ENCODE measurements at regions of chr5 and their contacts with region 1.

Region 1: GRCh38 chr5:217860-218456 is at the starts of genes CCDC127 and SDHA:
- DNase-seq: peak; percentile 100
- H3K4me3 Mint-ChIP-seq: peak within 1 kb of the TSS; percentile 97
- H3K27ac Mint-ChIP-seq: peak within 1 kb of the TSS; percentile 93
- H3K4me1 Mint-ChIP-seq: peaks cover 47% of the 10 kb centered on the region
- H3K27me3 Mint-ChIP-seq: no peaks in the 10 kb centered on the region
- total RNA-seq, gene CCDC127: 7.1 and 7.7 TPM in 2 replicates
- total RNA-seq, gene SDHA: 147 and 150 TPM in 2 replicates

Region 2: GRCh38 chr5:188488-189481 is 29.2 kb before region 1 on chr5:
- intact Hi-C with region 1: loop called (anchors 2 kb)
- DNase-seq: peak; percentile 97
- H3K4me3 Mint-ChIP-seq: peak overlapping the region; percentile 35
- H3K27ac Mint-ChIP-seq: no peak overlapping the region
- H3K4me1 Mint-ChIP-seq: peaks cover 12% of the 10 kb centered on the region
- H3K27me3 Mint-ChIP-seq: peaks cover 4% of the 10 kb centered on the region

Region 3: DNA sequence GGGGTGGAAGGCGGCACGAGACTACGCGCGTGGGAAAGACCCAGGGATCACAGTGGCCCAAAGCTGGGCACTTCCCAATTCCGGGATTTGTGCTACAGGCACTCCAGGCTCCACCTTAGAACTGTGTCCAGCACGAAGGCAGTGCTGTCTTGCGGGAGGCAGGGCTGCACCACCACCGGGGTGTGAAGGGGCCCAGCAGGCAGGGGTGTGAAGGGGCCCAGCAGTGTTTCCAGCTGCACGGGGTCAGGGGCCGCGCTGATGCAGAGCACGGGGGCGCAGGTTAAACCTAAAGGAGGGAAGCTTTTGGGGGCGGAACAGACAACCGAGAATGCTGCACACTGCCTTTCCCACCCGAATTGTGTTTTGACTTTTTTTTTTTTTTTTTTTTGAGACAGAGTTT is 52.4 kb after region 1 on chr5:
- intact Hi-C with region 1: loop called (anchors 1 kb)
- DNase-seq: no peak
- H3K4me3 Mint-ChIP-seq: peak overlapping the region; percentile 86
- H3K27ac Mint-ChIP-seq: peak overlapping the region; percentile 78
- H3K4me1 Mint-ChIP-seq: peaks cover 35% of the 10 kb centered on the region
- H3K27me3 Mint-ChIP-seq: no peaks in the 10 kb centered on the region

Region 4: GRCh38 chr5:373710-374602 is 156.0 kb after region 1 on chr5:
- intact Hi-C with region 1: loop called (anchors 10 kb)
- DNase-seq: peak; percentile 94
- H3K4me3 Mint-ChIP-seq: peak overlapping the region; percentile 74
- H3K27ac Mint-ChIP-seq: peak overlapping the region; percentile 95
- H3K4me1 Mint-ChIP-seq: peaks cover 53% of the 10 kb centered on the region
- H3K27me3 Mint-ChIP-seq: no peaks in the 10 kb centered on the region

Region 5: GRCh38 chr5:458547-459353 is 240.8 kb after region 1 on chr5:
- intact Hi-C with region 1: loop called (anchors 5 kb)
- DNase-seq: peak; percentile 87
- H3K4me3 Mint-ChIP-seq: peak overlapping the region; percentile 71
- H3K27ac Mint-ChIP-seq: peak overlapping the region; percentile 96
- H3K4me1 Mint-ChIP-seq: peaks cover 50% of the 10 kb centered on the region
- H3K27me3 Mint-ChIP-seq: no peaks in the 10 kb centered on the region

Measured in activated CD4-positive, alpha-beta T cell treated with anti-CD3 and anti-CD28 coated beads, Interleukin-2, amount 10 ng/mL, durations not matched to agents 24 days and 14 days (primary cell).